ENCODE measurements at regions of chr3 and their contacts with region 1.

Region 1: DNA sequence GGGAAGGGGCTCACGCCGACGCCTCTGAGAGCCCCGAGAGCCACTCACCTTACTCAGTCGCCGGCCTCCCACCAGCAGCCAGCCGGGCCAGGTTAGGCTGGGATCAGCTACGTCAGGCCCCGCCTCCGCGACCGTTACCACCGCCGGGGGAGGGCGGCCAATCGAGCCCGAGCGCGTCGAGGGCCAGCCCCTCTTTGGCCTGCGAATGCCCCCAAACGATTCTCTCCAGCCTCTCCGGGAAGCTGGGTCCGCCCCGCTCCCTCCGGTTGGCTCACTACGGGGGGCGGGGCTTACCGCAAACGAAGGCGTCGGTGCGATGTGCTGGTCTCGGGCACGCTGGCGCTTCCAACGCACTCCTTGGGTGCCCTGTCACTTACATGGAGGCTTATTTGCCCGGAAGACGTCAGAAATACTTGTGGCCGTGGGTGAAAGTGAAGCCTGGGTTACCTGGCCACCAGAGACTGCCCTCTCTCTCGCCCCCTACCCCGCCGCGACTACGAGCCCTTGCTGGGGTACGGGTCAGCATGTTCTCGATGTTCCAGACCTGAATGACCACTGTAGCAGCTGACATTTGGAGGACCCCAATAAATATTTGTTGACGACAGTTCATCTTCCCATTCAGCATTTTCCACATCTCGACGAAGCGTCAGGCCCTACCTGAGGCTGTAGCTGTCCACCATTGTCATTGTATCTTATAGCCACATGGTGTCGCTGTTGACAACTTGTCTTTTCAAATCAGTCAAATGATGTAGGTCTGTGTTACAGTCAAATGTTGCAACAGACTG is at the start of gene CEP70:
- DNase-seq: peak; percentile 77
- ATAC-seq: peak; percentile 94
- H3K4me3 Mint-ChIP-seq: peak within 1 kb of the TSS; percentile 90
- H3K27ac Mint-ChIP-seq: peak within 1 kb of the TSS; percentile 86
- H3K4me1 Mint-ChIP-seq: peaks cover 10% of the 10 kb centered on the region
- H3K27me3 Mint-ChIP-seq: no peaks in the 10 kb centered on the region
- CTCF ChIP-seq: peak; percentile 32
- total RNA-seq, gene CEP70: 5.9 and 11.0 TPM in 2 replicates

Region 2: DNA sequence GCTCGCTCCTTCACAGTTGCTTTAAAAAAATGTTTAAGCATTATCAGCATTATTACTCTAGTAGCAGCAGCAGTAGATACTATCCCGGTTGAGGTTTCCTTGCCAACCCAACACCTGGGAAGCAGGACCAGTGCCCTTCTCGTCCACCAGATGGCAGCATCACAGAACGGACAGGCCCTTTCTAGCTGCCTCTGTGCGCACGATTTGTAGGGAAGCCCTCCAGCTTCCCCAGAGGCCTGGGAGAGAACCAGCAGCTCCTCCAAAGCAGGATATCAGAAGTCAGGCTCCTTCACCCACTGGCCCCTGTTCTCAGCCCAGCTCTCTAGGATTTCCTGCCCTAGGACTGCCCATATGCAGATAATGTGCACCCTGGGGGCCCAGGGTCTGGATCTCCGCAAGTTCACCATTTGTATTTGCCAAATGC is 176.8 kb before region 1 on chr3:
- CTCF ChIA-PET with region 1: no interaction called
- POLR2A ChIA-PET with region 1: no interaction called
- intact Hi-C with region 1: loop called (anchors 1 kb)
- DNase-seq: no peak
- ATAC-seq: peak; percentile 49
- H3K4me3 Mint-ChIP-seq: no peak overlapping the region
- H3K27ac Mint-ChIP-seq: no peak overlapping the region
- H3K4me1 Mint-ChIP-seq: no peaks in the 10 kb centered on the region
- H3K27me3 Mint-ChIP-seq: peaks cover 24% of the 10 kb centered on the region
- CTCF ChIP-seq: peak; percentile 79

Region 3: GRCh38 chr3:138608322-138609135 is 14.2 kb after region 1 on chr3 and contains the start of gene FAIM:
- CTCF ChIA-PET with region 1: interaction called, 8 read pairs
- POLR2A ChIA-PET with region 1: interaction called, 33 read pairs
- intact Hi-C with region 1: loop called (anchors 1 kb)
- DNase-seq: peak; percentile 71
- ATAC-seq: peak; percentile 75
- H3K4me3 Mint-ChIP-seq: peak within 1 kb of the TSS; percentile 87
- H3K27ac Mint-ChIP-seq: peak within 1 kb of the TSS; percentile 83
- H3K4me1 Mint-ChIP-seq: peaks cover 23% of the 10 kb centered on the region
- H3K27me3 Mint-ChIP-seq: no peaks in the 10 kb centered on the region
- CTCF ChIP-seq: no peak
- total RNA-seq, gene FAIM: 10.5 and 11.5 TPM in 2 replicates

Region 4: DNA sequence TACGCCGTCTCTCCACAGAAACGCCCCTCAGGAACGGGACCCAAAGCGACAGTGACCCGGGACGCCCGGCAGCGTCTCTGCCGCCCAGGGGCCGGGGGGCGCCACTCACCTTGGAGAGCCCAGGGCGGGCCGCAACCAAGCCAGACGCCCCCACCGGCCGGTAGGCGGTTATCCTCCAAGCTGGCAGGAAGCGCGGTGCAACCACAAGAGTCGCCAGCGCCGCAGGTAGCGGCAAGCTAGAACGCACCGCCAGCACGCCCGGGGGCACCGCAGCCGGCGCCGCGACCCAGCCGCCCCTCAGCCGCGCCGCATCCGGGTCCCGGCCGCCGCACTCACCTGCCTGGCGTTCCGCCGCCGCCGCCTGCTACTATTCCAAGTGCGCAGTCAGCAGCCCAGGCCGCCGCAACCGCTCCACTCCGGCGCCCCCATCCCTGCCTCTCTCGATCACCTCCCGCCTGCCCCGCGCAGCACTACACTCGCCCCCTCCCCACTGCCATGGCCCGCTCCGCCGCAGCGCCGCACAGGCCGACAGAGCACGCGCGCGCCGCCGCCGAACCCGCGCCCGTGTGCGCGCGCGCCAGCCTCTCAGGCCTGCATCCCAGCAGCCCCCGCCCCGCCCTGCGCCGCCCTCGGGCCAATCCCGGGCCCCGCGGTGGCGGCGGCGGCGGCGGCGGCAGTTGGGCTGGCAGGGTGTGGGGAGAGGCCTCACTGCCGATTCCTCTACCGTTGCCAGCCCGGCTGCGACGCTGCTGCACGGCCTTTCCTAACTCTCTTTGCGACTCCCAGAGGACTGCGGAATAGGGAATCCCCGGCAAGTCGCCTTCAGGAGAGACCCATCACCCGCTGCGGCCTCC is 240.2 kb after region 1 on chr3 and contains the start of gene PIK3CB:
- CTCF ChIA-PET with region 1: interaction called, 3 read pairs
- POLR2A ChIA-PET with region 1: no interaction called
- intact Hi-C with region 1: loop called (anchors 1 kb)
- DNase-seq: peak; percentile 85
- ATAC-seq: peak; percentile 94
- H3K4me3 Mint-ChIP-seq: peak within 1 kb of the TSS; percentile 92
- H3K27ac Mint-ChIP-seq: peak within 1 kb of the TSS; percentile 95
- H3K4me1 Mint-ChIP-seq: peaks cover 24% of the 10 kb centered on the region
- H3K27me3 Mint-ChIP-seq: no peaks in the 10 kb centered on the region
- CTCF ChIP-seq: no peak
- total RNA-seq, gene PIK3CB: 19.9 and 21.9 TPM in 2 replicates

Region 5: GRCh38 chr3:138915503-138916498 is 321.5 kb after region 1 on chr3:
- CTCF ChIA-PET with region 1: interaction called, 216 read pairs
- POLR2A ChIA-PET with region 1: interaction called, 27 read pairs
- intact Hi-C with region 1: loop called (anchors 1 kb)
- DNase-seq: peak; percentile 84
- ATAC-seq: peak; percentile 86
- H3K4me3 Mint-ChIP-seq: peak overlapping the region; percentile 83
- H3K27ac Mint-ChIP-seq: peak overlapping the region; percentile 75
- H3K4me1 Mint-ChIP-seq: peaks cover 5% of the 10 kb centered on the region
- H3K27me3 Mint-ChIP-seq: peaks cover 6% of the 10 kb centered on the region
- CTCF ChIP-seq: peak; percentile 78

Region 6: GRCh38 chr3:139329345-139329850 is 735.1 kb after region 1 on chr3:
- CTCF ChIA-PET with region 1: interaction called, 4 read pairs
- POLR2A ChIA-PET with region 1: no interaction called
- intact Hi-C with region 1: loop called (anchors 1 kb)
- DNase-seq: peak; percentile 71
- ATAC-seq: peak; percentile 93
- H3K4me3 Mint-ChIP-seq: peak overlapping the region; percentile 69
- H3K27ac Mint-ChIP-seq: no peak overlapping the region
- H3K4me1 Mint-ChIP-seq: peaks cover 9% of the 10 kb centered on the region
- H3K27me3 Mint-ChIP-seq: peaks cover 26% of the 10 kb centered on the region
- CTCF ChIP-seq: peak; percentile 42

Measured in activated B cell treated with CpG ODN at 0.5 μM for 24 hours (primary cell).